Mammary epithelial cell (primary cell): ENCODE measurements at regions of chr5 and their contacts with region 1.

Region 1: GRCh38 chr5:177468696-177469628 is 4.5 kb downstream of the DBN1 start:
- DNase-seq: no peak
- H3K4me3 ChIP-seq: no peak overlapping the region
- H3K27ac ChIP-seq: no peak overlapping the region
- H3K4me1 ChIP-seq: peaks cover 38% of the 10 kb centered on the region
- H3K27me3 ChIP-seq: no peaks in the 10 kb centered on the region
- CTCF ChIP-seq: no peak

Region 2: DNA sequence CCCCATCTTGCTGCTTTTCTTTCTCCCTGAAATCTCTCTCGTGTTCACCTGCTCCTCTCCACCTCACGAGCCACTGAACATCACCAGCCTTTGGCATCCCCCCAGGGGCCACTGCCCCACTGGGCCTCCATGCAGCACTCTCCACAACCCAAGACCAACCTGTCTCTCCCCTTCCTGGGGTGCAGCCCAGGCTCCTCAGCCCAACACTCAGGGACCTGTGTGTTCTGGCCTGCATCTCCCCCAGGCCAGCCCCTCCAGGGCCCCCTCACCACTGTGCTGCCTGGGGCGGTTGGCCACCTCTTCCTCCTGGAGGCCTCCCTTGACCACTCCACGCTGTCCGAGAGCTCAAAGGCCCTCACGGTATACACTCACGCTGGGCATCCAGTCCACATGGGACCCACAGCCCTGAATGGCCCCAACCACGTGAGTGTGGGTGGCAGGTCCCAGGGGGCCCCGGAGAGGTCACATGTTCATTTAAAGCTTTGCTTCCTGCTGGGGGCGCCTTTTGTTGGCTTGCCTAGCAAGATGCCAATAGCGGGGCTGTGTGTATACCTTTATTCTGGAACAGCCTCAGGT is 41.1 kb after region 1 on chr5:
- CTCF ChIA-PET with region 1: no interaction called
- dilution Hi-C with region 1: loop called (anchors 5 kb)
- in situ Hi-C with region 1: no loop called
- intact Hi-C with region 1: no loop called
- DNase-seq: no peak
- H3K4me3 ChIP-seq: no peak overlapping the region
- H3K27ac ChIP-seq: no peak overlapping the region
- H3K4me1 ChIP-seq: no peaks in the 10 kb centered on the region
- H3K27me3 ChIP-seq: no peaks in the 10 kb centered on the region
- CTCF ChIP-seq: no peak

Region 3: DNA sequence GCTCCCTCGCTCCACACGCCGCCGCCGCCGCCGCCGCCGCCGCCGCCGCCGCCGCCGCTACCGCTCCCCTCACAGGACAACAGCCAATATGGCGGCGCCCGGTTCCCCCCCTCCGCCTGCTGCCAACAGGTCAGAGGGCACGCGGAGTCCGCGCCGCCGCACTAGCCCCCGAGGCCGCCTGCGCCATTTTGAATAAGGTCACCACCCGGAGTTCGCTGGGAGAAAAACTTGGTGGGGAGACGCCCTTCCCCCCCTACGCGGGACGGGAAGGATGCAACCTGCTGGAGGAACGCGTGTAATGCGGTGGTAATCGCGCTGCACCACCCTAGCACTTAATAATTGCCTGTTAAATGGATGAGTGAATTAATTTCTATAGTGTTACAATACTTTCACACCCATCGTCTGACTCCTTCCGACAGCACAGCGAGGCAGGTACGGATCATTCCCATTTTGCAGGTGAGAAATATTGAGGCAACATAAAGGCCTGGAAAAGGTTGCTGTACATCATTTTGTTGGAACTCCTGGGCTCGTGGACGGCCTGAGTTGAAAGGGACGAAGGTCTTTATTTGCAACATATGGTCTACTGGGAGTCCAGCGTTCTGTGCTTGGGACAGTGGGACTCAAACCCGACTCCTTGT is 85.6 kb after region 1 on chr5 and contains the start of gene FAM193B:
- CTCF ChIA-PET with region 1: no interaction called
- dilution Hi-C with region 1: no loop called
- in situ Hi-C with region 1: no loop called
- intact Hi-C with region 1: no loop called
- DNase-seq: peak; percentile 86
- H3K4me3 ChIP-seq: peak within 1 kb of the TSS; percentile 80 to 96 (median 84)
- H3K27ac ChIP-seq: peak within 1 kb of the TSS; percentile 25
- H3K4me1 ChIP-seq: peaks cover 15% of the 10 kb centered on the region
- H3K27me3 ChIP-seq: no peaks in the 10 kb centered on the region
- CTCF ChIP-seq: peak; percentile 16 to 41
- total RNA-seq, gene FAM193B: 30.7 to 63.3 TPM

Region 4: GRCh38 chr5:178232124-178232919 is 763.4 kb after region 1 on chr5 and contains the start of gene PHYKPL:
- CTCF ChIA-PET with region 1: no interaction called
- dilution Hi-C with region 1: no loop called
- in situ Hi-C with region 1: no loop called
- intact Hi-C with region 1: no loop called
- DNase-seq: peak; percentile 50
- H3K4me3 ChIP-seq: peak within 1 kb of the TSS; percentile 56 to 75 (median 73)
- H3K27ac ChIP-seq: no peak within 1 kb of the TSS
- H3K4me1 ChIP-seq: peaks cover 41% of the 10 kb centered on the region
- H3K27me3 ChIP-seq: no peaks in the 10 kb centered on the region
- CTCF ChIP-seq: peak; percentile 2 to 17
- total RNA-seq, gene PHYKPL: 14.8 to 25.2 TPM